ENCODE measurements at regions of chr5 and their contacts with region 1.

Region 1: DNA sequence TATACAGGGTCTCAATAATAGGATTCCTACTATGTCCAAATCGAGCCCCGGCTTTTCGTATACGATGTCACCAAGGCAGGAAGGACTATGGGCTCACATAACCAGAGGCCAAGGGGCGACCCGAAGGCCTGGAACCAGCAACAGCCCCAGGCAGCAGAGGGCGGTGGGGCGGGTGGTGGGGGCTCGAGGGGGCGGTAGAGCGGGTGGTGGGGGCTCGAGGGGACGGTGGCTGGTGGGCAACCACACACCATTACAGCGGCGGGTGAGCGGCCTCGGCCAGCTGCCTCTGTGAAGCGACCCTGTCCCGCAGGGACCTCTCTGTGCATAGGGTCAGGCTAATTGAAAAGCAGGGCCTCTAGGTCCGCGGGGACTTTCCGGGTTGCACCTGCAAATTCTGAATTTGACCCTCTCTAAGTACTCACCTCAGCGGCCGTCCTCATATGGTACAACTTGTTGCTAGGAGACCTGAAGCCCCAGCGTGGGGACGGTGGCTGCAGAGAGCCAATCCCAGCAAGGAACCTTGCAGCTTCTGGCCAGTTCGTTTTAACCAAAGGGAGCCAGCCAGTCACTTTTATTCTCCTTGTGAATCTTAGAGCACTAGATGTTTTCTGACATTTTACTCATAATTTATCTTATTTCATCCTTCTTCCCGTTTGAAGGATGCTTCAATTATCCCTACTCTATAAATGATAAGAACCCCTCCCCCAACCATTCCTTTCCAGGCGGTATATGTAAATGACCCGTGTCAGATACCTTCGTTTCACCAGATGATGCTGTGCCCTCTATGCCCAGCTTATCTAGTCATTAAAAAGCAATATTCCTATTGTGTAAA is at the start of gene NME5:
- DNase-seq: no peak
- H3K4me3 Mint-ChIP-seq: peak within 1 kb of the TSS; percentile 21
- H3K27ac Mint-ChIP-seq: no peak within 1 kb of the TSS
- H3K4me1 Mint-ChIP-seq: no peaks in the 10 kb centered on the region
- H3K27me3 Mint-ChIP-seq: no peaks in the 10 kb centered on the region
- CTCF ChIP-seq: no peak
- total RNA-seq, gene NME5: 1.0 TPM in 1 of 2 replicates, not detected in the other

Region 2: GRCh38 chr5:138093036-138093435 is 46.1 kb before region 1 on chr5:
- CTCF ChIA-PET with region 1: interaction called, 11 read pairs
- POLR2A ChIA-PET with region 1: no interaction called
- intact Hi-C with region 1: no loop called
- DNase-seq: no peak
- H3K4me3 Mint-ChIP-seq: no peak overlapping the region
- H3K27ac Mint-ChIP-seq: no peak overlapping the region
- H3K4me1 Mint-ChIP-seq: no peaks in the 10 kb centered on the region
- H3K27me3 Mint-ChIP-seq: peaks cover 86% of the 10 kb centered on the region
- CTCF ChIP-seq: no peak

Region 3: GRCh38 chr5:138159666-138160065 is 20.5 kb after region 1 on chr5:
- CTCF ChIA-PET with region 1: no interaction called
- POLR2A ChIA-PET with region 1: no interaction called
- intact Hi-C with region 1: no loop called
- DNase-seq: no peak
- H3K4me3 Mint-ChIP-seq: no peak overlapping the region
- H3K27ac Mint-ChIP-seq: no peak overlapping the region
- H3K4me1 Mint-ChIP-seq: no peaks in the 10 kb centered on the region
- H3K27me3 Mint-ChIP-seq: no peaks in the 10 kb centered on the region
- CTCF ChIP-seq: no peak